Activated T-helper 1 cell treated with anti-CD3 and anti-CD28 coated beads, Interleukin-12 subunit alpha, Interleukin-12 subunit beta, Interleukin-2, Interleukin-4 antibody, amounts not matched to agents 30 ng/mL and 10 ng/mL and 1 ng/mL, durations not matched to agents 14 hours and 24 hours and 36 hours (primary cell): ENCODE measurements at regions of chr2 and their contacts with region 1.

Region 1: GRCh38 chr2:231227309-231228162 is 29.1 kb downstream of the ARMC9 start:
- DNase-seq: peak; percentile 24
- H3K4me3 Mint-ChIP-seq: no peak overlapping the region
- H3K27ac Mint-ChIP-seq: no peak overlapping the region
- H3K4me1 Mint-ChIP-seq: no peaks in the 10 kb centered on the region
- H3K27me3 Mint-ChIP-seq: peaks cover 2% of the 10 kb centered on the region

Region 2: DNA sequence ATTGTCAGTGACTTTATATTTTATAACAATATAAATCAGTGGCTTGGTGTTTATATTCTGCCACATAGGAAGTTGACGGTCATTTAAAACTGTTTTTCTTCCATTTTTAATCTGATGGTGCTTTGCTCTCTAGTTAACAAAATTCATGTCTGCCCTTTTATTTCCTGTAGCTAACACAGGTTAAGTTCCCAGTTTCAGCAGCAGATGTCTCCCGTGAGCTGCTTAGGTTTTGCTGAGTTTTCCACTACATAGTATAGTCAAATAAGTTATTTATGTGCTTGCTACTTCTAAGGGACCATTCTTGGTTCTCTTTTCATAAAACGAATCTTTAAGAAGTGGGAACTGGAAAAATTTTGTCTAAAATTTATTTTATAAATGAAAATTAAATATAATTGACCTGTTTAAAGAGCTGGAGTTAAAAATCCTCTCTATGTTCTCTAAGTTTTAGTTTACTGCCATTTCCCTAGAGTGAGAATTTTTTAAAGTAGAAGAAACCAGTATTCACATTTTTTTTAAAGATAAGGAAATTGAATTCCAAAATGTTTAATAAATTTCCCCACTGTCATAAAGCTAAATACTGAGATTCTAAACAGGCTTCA is 123.3 kb before region 1 on chr2:
- intact Hi-C with region 1: loop called (anchors 1 kb)
- DNase-seq: peak; percentile 25
- H3K4me3 Mint-ChIP-seq: no peak overlapping the region
- H3K27ac Mint-ChIP-seq: no peak overlapping the region
- H3K4me1 Mint-ChIP-seq: peaks cover 22% of the 10 kb centered on the region
- H3K27me3 Mint-ChIP-seq: no peaks in the 10 kb centered on the region

Region 3: GRCh38 chr2:231399853-231400680 is 172.5 kb after region 1 on chr2:
- intact Hi-C with region 1: loop called (anchors 1 kb)
- DNase-seq: no peak
- H3K4me3 Mint-ChIP-seq: no peak overlapping the region
- H3K27ac Mint-ChIP-seq: no peak overlapping the region
- H3K4me1 Mint-ChIP-seq: peaks cover 1% of the 10 kb centered on the region
- H3K27me3 Mint-ChIP-seq: peaks cover 21% of the 10 kb centered on the region

Region 4: GRCh38 chr2:231411831-231412617 is 184.5 kb after region 1 on chr2:
- intact Hi-C with region 1: loop called (anchors 1 kb)
- DNase-seq: peak; percentile 26
- H3K4me3 Mint-ChIP-seq: peak overlapping the region; percentile 20
- H3K27ac Mint-ChIP-seq: no peak overlapping the region
- H3K4me1 Mint-ChIP-seq: peaks cover 2% of the 10 kb centered on the region
- H3K27me3 Mint-ChIP-seq: peaks cover 34% of the 10 kb centered on the region

Region 5: DNA sequence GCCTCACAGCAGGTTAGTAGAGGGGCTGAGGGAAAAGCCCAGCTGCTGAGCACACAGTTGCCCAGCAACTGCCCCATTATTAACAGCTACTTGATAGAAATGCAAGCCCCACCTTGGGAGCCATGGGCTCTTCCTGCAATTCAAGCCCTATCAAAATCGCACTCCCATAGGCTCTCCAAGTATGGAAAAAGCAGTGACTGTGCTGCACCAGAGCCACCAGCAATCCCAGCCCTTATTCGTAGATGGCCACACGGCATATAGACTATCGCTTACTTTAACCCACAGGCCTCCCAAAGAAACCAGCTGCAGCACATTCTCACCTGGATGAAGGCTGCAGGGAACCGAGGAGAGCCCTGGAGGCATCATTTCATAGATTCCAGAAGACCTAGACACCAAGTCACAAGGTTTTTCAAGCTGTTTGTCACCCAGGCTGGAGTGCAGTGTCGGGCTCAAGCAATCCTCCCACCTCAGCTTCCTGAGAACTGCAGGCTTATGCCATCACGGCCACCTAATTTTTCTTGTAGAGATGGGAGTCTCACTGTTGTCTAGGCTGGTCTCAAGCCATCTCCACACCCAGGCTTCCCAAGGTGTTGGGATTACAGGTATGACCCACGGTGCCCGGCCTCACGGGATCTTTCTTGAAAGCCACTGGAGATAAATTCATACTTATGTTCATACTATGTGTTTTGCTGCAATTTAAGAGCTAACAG is 225.4 kb after region 1 on chr2:
- intact Hi-C with region 1: loop called (anchors 1 kb)
- DNase-seq: no peak
- H3K4me3 Mint-ChIP-seq: no peak overlapping the region
- H3K27ac Mint-ChIP-seq: peak overlapping the region; percentile 52
- H3K4me1 Mint-ChIP-seq: peaks cover 17% of the 10 kb centered on the region
- H3K27me3 Mint-ChIP-seq: no peaks in the 10 kb centered on the region